Activated CD4-positive, alpha-beta memory T cell treated with anti-CD3 and anti-CD28 coated beads for 36 hours (primary cell): ENCODE measurements at regions of chr2 and their contacts with region 1.

Region 1: DNA sequence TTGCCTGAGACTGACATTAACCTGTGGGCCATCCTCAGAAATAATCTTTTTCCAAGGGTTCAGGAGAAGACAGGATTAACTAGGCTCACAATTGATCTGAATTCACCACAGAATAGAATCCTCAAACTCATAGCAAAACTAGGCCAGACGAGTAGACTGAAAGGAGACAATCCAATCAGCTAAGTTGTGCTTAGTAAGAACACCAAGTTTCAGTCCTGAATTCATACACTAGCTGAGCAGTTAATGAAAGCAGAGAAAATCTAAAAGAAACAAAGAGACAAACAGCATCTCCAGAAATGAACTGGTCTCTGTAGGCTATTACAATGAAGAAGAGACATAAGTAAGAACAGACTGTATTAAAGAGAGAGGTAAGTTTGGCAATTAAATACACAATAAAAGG is 89.5 kb downstream of the GORASP2 start:
- DNase-seq: no peak
- H3K4me3 Mint-ChIP-seq: no peak overlapping the region
- H3K27ac Mint-ChIP-seq: peak overlapping the region; percentile 64
- H3K4me1 Mint-ChIP-seq: peaks cover 36% of the 10 kb centered on the region
- H3K27me3 Mint-ChIP-seq: no peaks in the 10 kb centered on the region

Region 2: DNA sequence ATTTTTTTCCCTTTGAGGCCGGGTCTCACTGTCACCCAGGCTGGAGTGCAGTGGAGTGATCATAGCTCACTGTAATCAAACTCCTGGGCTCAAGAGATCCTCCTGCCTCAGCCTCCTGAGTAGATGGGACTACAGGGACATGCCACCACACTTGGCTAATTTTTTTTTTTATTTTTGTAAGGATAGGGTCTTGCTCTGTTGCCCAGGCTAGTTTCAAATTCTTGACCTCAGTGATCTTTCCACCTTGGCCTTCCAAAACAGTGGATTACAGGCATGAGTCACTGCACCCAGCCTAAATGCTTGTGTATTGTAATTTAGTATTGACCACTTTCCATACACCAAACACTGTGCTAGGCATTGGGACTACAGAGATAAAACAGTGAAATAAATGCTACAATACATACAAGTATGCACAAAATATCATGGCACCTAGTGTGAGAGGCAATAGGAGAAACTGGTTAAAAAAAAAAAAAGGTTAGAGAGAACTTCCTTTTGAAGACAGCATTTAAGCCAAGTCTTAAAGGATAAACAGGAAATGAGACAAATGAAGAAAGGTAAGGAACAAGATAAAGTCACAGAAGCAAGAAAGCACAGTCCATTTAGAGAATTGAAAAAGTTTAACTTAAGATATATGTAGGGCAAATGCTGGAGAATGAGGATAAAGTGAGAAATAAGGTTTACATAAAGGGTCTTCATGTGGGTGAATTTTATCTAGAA is 23.9 kb after region 1 on chr2:
- CTCF ChIA-PET with region 1: no interaction called
- POLR2A ChIA-PET with region 1: no interaction called
- intact Hi-C with region 1: loop called (anchors 1 kb)
- DNase-seq: no peak
- H3K4me3 Mint-ChIP-seq: no peak overlapping the region
- H3K27ac Mint-ChIP-seq: peak overlapping the region; percentile 76
- H3K4me1 Mint-ChIP-seq: peaks cover 30% of the 10 kb centered on the region
- H3K27me3 Mint-ChIP-seq: no peaks in the 10 kb centered on the region

Region 3: DNA sequence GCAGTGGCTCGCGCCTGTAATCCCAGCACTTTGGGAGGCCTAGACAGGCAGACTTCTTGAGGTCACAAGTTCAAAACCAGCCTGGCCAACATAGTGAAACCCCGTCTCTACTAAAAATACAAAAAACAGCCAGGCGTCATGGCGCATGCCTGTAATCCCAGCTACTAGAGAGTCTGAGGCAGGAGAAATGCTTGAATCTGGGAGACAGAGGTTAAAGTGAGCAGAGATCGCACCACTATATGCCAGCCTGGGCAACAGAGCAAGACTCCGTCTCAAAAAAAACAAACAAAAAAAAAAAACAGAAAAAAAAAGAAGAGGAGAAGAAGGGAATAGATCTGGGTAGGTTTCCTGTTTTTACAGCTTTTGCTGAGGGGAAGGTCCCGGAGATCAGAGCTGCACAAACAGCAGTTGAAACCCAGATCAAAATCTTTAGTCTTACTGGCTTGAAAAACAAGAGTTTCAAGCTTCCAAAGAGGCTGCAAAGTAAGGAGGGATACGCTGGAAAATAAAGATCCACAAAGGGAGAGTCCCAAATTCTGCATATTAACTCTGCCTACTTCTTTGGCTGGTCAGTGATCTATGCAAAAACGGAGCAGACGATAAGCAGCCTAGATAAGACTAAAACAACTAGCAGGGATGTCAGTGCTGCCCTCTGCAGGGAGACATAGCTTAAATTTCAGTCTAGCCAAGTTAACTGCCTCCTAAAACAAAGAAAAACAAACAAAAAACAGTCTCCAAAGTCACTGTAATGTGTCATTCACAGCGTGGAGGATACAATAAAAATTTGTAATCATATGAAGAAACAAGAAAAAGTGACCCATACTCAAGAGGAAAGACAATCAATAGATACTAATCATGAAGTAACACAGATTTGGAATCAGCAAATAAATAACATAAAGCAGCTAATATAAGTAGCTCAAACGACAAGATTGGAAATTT is 68.1 kb after region 1 on chr2:
- CTCF ChIA-PET with region 1: interaction called, 4 read pairs
- POLR2A ChIA-PET with region 1: no interaction called
- intact Hi-C with region 1: loop called (anchors 1 kb)
- DNase-seq: peak; percentile 66
- H3K4me3 Mint-ChIP-seq: peak overlapping the region; percentile 64
- H3K27ac Mint-ChIP-seq: peak overlapping the region; percentile 43
- H3K4me1 Mint-ChIP-seq: peaks cover 58% of the 10 kb centered on the region
- H3K27me3 Mint-ChIP-seq: no peaks in the 10 kb centered on the region

Region 4: GRCh38 chr2:171136024-171136423 is 117.5 kb after region 1 on chr2:
- CTCF ChIA-PET with region 1: no interaction called
- POLR2A ChIA-PET with region 1: no interaction called
- intact Hi-C with region 1: loop called (anchors 1 kb)
- DNase-seq: peak; percentile 55
- H3K4me3 Mint-ChIP-seq: peak overlapping the region; percentile 27
- H3K27ac Mint-ChIP-seq: peak overlapping the region; percentile 78
- H3K4me1 Mint-ChIP-seq: peaks cover 69% of the 10 kb centered on the region
- H3K27me3 Mint-ChIP-seq: no peaks in the 10 kb centered on the region

Region 5: DNA sequence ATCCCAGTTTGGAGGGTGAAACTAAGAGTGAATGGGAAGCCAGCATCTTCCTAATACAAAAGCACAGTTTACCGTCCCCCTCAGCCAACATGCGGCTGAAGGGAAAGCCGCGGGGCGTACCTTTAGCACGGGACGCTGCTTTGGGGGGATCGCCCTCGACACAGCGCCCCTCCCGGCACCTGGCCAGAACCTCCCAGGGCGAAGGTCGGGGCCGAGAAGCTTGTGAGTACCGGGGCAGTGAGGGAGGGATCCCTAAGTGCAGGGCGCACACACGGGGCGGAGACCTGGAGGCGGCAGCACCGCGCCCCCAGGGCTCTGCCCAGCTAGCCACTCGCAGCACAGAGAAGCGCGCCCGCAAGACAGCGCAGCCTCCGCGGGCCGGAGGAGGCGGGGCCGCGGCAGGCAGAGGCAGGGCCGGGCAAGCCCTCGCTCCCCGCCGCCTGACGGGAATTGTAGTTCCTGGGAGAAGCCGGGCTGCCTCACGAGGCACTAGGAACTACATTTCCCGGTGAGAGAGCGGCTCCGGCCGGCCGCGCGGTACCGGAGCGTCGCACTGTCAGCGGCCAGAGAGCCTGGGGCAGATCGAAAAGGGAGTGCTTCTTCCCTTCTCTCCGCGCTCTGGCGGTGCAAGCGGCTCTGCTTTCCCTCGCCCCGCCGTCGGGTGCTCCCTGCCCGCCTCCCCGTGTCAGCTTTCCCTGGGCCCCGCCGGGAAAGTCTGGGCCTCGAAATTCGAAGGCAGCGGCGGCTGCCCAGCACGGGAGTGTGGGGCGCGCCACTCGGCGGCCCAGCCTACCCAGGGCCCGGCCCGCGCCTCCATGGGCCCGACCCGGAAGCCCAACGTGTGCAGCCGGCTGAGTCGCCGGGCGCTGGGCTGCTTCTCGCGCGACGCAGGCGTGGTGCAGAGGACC is 415.5 kb after region 1 on chr2 and contains the starts of genes DCAF17 and METTL8:
- CTCF ChIA-PET with region 1: no interaction called
- POLR2A ChIA-PET with region 1: no interaction called
- intact Hi-C with region 1: loop called (anchors 5 kb)
- DNase-seq: peak; percentile 96
- H3K4me3 Mint-ChIP-seq: peak within 1 kb of the TSS; percentile 92
- H3K27ac Mint-ChIP-seq: peak within 1 kb of the TSS; percentile 92
- H3K4me1 Mint-ChIP-seq: peaks cover 57% of the 10 kb centered on the region
- H3K27me3 Mint-ChIP-seq: no peaks in the 10 kb centered on the region
- total RNA-seq, gene DCAF17: 14.1 to 14.7 TPM
- total RNA-seq, gene METTL8: 33.3 to 40.9 TPM